ENCODE measurements at regions of chr6 and their contacts with region 1.

Region 1: DNA sequence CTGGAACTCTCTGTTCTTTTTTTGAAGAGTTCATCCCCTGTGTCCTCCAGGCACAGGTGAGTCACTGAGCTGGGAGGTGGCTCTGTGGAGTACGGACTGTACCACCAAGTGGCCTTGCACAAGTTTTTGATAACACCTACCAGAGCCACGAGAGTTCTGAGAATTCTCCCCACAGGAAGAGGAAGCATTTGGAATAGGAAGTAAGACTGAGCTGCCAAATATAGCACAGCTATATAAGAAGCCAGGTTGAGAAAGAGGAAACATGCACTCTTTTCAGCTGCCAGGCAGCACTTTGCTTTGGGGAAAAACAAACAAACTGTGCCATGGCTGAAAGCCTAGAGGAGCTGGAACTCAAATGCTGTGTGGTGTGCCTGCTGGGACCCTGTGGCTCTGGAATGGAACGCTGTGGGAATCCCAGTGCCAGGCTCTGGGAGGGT is 70.8 kb upstream of the RIPOR2 start:
- DNase-seq: peak in 5 of 10 donors; percentile 15 to 40 (median 28)
- ATAC-seq: peak; percentile 69 to 70
- H3K4me3 Mint-ChIP-seq: peak overlapping the region; percentile 38 to 81 (median 74)
- H3K27ac Mint-ChIP-seq: peak overlapping the region; percentile 71 to 96 (median 91)
- H3K4me1 Mint-ChIP-seq: peaks cover 44 to 80% (median 75%) of the 10 kb centered on the region in 4 donors
- H3K27me3 Mint-ChIP-seq: no peaks in the 10 kb centered on the region

Region 2: GRCh38 chr6:25017932-25018567 is 11.5 kb after region 1 on chr6:
- POLR2A ChIA-PET with region 1: interaction called, 14 read pairs
- DNase-seq: peak; percentile 59 to 92 (median 78)
- ATAC-seq: peak; percentile 72 to 74
- H3K4me3 Mint-ChIP-seq: peak overlapping the region in 7 of 10 donors; percentile 23 to 72 (median 46)
- H3K27ac Mint-ChIP-seq: peak overlapping the region; percentile 84 to 96 (median 91)
- H3K4me1 Mint-ChIP-seq: peaks cover 17 to 43% (median 35%) of the 10 kb centered on the region in 4 donors
- H3K27me3 Mint-ChIP-seq: no peaks in the 10 kb centered on the region